ENCODE measurements at regions of chr2 and their contacts with region 1.

Region 1: GRCh38 chr2:143110758-143111428 is 18.3 kb upstream of the ARHGAP15 start:
- DNase-seq: no peak
- H3K4me3 ChIP-seq: no peak overlapping the region
- H3K27ac ChIP-seq: no peak overlapping the region
- H3K4me1 ChIP-seq: no peaks in the 10 kb centered on the region
- H3K27me3 ChIP-seq: no peaks in the 10 kb centered on the region
- CTCF ChIP-seq: peak; percentile 50 to 66 (median 57)
- POLR2A ChIP-seq: no peak

Region 2: GRCh38 chr2:142825861-142826260 is 285.0 kb before region 1 on chr2:
- intact Hi-C with region 1: no loop called
- DNase-seq: no peak
- H3K4me3 ChIP-seq: no peak overlapping the region
- H3K27ac ChIP-seq: no peak overlapping the region
- H3K4me1 ChIP-seq: no peaks in the 10 kb centered on the region
- H3K27me3 ChIP-seq: no peaks in the 10 kb centered on the region
- CTCF ChIP-seq: no peak
- POLR2A ChIP-seq: no peak

Region 3: DNA sequence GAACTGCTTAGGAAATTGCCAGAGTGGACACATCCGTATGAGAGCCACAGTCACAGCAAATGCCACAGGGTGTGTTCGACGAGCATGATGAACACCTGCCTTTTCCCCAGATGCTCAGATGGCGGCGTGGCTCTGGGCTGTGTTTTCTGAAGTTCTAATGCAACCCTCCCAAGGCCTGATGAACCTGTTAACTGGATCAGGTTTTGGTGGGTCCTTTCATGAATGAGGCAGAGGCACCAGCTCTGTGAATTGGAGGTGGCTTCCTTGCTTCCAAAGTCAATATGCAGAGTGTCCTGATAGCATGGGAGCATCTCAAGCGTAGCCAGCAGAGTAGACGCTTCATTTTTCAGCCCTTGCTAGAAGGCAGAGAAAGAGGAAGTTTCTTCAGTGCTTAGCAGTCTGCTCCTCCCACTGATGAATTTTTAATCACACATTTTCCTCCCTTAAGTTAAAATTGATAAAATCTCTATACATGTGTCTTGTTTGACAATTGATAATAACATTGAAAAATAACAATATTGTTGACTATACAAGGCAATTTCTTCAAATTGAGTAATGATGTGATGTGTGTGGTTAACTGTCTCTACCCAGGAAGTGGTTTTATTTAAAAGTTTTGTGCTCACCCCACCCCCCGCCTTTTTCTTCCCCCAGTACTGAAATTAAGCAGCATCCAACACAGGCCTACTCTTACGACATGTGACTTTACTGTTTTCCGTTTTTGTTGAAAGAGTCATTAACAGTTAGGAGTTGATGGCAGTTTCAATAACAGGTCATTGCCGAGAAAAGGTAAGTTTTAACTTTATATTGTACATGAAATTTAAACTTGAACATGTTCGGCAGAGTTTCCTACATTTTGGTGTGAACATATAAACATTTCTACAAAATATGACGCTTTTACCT is 18.0 kb after region 1 on chr2 and contains the start of gene ARHGAP15:
- intact Hi-C with region 1: no loop called
- DNase-seq: no peak
- H3K4me3 ChIP-seq: no peak within 1 kb of the TSS
- H3K27ac ChIP-seq: peak within 1 kb of the TSS; percentile 18
- H3K4me1 ChIP-seq: no peaks in the 10 kb centered on the region
- H3K27me3 ChIP-seq: no peaks in the 10 kb centered on the region
- CTCF ChIP-seq: no peak
- POLR2A ChIP-seq: no peak
- total RNA-seq, gene ARHGAP15: 9.1 TPM

Region 4: GRCh38 chr2:143229952-143230351 is 119.1 kb after region 1 on chr2:
- intact Hi-C with region 1: loop called (anchors 10 kb)
- DNase-seq: no peak
- H3K4me3 ChIP-seq: no peak overlapping the region
- H3K27ac ChIP-seq: no peak overlapping the region
- H3K4me1 ChIP-seq: no peaks in the 10 kb centered on the region
- H3K27me3 ChIP-seq: no peaks in the 10 kb centered on the region
- CTCF ChIP-seq: no peak
- POLR2A ChIP-seq: no peak